ENCODE measurements at regions of chr20 and their contacts with region 1.

Region 1: DNA sequence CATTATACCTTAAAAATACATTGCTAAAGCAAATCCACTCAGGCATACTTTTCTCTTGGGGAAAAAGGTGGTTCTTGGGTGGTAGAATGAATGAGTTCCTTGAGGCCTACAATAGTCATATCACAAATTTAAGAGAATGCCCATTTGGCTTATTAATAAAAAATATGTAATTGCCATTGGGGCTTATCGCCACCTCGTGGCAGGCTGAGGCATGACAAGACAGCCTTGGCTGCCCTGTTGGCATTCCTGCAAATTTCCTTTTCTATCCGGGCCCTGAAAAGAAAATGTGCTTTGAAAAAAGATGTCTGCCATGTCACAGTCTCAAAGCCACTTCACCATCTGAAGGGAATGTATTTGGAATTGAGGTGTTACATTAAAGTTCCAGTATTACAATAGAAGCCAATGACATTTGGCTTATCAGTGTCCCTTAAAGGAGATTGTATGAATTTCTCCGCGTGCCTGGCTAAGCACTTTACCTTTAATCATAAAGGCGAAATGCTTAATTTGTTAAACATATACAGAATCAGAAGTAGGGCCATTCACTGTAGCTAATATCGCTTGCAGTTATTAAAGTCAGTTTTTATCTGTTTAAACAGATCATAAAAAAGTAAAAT is 188.3 kb upstream of the ZFP64 start:
- DNase-seq: peak; percentile 40
- H3K4me3 Mint-ChIP-seq: no peak overlapping the region
- H3K27ac Mint-ChIP-seq: no peak overlapping the region
- H3K4me1 Mint-ChIP-seq: peaks cover 14% of the 10 kb centered on the region
- H3K27me3 Mint-ChIP-seq: no peaks in the 10 kb centered on the region

Region 2: DNA sequence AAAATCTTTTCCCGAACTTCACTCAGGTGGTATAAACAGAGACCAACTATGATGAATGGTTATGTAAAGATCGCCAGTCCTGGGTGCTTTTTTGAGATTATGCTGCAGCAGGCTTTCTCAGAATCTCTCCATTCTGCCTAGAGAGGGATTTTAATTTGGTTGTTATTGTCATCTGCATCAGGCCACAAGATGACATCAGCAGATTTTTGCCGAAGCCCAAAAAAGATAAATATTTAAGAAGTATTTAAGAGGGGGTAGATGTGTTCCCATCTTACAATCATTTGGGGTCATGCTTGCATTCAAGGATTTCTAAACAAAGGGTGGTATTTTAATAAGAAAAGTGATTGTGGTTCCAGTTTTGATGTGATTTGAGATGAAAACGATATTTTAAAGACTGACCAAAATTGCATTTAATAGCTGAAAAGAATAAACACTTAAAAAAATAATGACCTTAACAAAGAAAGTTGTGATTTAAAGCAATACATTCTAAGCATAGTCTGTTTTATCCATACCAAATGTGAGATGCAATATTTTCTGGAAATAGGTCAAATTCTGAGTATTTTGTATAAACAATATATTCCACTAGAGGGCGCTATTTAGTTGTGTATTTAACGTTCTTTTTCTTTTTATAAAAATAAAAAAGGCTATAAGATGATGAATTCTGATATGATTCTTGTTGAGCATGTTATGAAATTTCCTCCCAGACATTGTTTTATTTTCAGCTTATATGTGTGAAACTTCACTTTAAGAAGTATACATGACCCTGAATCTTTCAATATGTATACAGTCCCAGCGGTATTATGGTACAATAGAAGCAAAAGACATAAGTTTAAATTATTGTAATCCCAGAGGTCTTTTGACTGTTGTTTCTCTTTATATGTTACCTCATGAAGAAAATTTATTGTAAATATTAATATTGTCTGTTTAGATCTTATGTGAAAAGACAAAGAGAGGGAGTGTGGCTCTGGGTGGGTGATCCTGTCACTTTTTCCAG is 137.3 kb before region 1 on chr20:
- CTCF ChIA-PET with region 1: interaction called, 4 read pairs
- POLR2A ChIA-PET with region 1: no interaction called
- intact Hi-C with region 1: loop called (anchors 2 kb)
- DNase-seq: no peak
- H3K4me3 Mint-ChIP-seq: no peak overlapping the region
- H3K27ac Mint-ChIP-seq: no peak overlapping the region
- H3K4me1 Mint-ChIP-seq: no peaks in the 10 kb centered on the region
- H3K27me3 Mint-ChIP-seq: peaks cover 2% of the 10 kb centered on the region

Region 3: GRCh38 chr20:52402950-52403349 is 23.1 kb after region 1 on chr20:
- CTCF ChIA-PET with region 1: interaction called, 10 read pairs
- POLR2A ChIA-PET with region 1: no interaction called
- intact Hi-C with region 1: no loop called
- DNase-seq: no peak
- H3K4me3 Mint-ChIP-seq: no peak overlapping the region
- H3K27ac Mint-ChIP-seq: no peak overlapping the region
- H3K4me1 Mint-ChIP-seq: peaks cover 63% of the 10 kb centered on the region
- H3K27me3 Mint-ChIP-seq: no peaks in the 10 kb centered on the region

Region 4: DNA sequence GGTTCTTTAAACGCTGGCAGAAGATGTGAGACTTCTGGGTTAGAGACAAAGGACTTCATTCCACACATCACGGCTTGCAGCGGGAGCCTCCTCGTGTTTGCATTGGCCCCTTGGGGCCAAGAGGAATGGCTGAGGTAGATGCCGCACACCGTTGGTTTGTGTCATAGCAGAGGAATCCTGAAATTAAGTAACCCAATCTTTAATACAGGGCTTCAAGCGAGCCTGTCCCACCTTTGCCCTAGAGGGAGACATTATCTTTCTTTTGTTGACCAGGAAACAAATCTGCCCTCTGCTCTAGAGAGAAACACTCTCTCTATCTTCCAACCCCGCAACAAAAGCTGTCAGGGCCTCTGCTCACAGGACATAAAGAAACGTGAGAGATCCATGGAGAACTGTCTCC is 89.3 kb after region 1 on chr20:
- CTCF ChIA-PET with region 1: no interaction called
- POLR2A ChIA-PET with region 1: no interaction called
- intact Hi-C with region 1: no loop called
- DNase-seq: no peak
- H3K4me3 Mint-ChIP-seq: no peak overlapping the region
- H3K27ac Mint-ChIP-seq: no peak overlapping the region
- H3K4me1 Mint-ChIP-seq: no peaks in the 10 kb centered on the region
- H3K27me3 Mint-ChIP-seq: no peaks in the 10 kb centered on the region

Measured in activated CD4-positive, alpha-beta memory T cell treated with anti-CD3 and anti-CD28 coated beads for 36 hours (primary cell).